Ascending aorta (tissue), 2 donors: ENCODE measurements at regions of chr4 and their contacts with region 1.

Region 1: GRCh38 chr4:122914292-122914904 is 8.0 kb downstream of the NUDT6 start:
- DNase-seq: no peak
- H3K4me3 ChIP-seq: no peak overlapping the region
- H3K27ac ChIP-seq: no peak overlapping the region
- H3K4me1 ChIP-seq: no peaks in the 10 kb centered on the region
- H3K27me3 ChIP-seq: no peaks in the 10 kb centered on the region
- CTCF ChIP-seq: peak in 2 of 3 experiments; percentile 14 to 57

Region 2: GRCh38 chr4:122666527-122667245 is 247.7 kb before region 1 on chr4:
- intact Hi-C with region 1: loop called (anchors 10 kb)
- DNase-seq: no peak
- H3K4me3 ChIP-seq: no peak overlapping the region
- H3K27ac ChIP-seq: peak overlapping the region; percentile 50 to 53
- H3K4me1 ChIP-seq: peaks cover 0 to 13% of the 10 kb centered on the region in 2 donors
- H3K27me3 ChIP-seq: no peaks in the 10 kb centered on the region
- CTCF ChIP-seq: no peak

Region 3: GRCh38 chr4:122758033-122758432 is 156.4 kb before region 1 on chr4:
- intact Hi-C with region 1: loop called (anchors 1 kb)
- DNase-seq: no peak
- H3K4me3 ChIP-seq: no peak overlapping the region
- H3K27ac ChIP-seq: no peak overlapping the region
- H3K4me1 ChIP-seq: no peaks in the 10 kb centered on the region
- H3K27me3 ChIP-seq: no peaks in the 10 kb centered on the region
- CTCF ChIP-seq: peak; percentile 51 to 82 (median 64)